Dendritic cell treated with granulocyte-macrophage colony-stimulating factor and Interleukin-4, amounts not matched to agents 40 ng/mL and 50 ng/mL, for 4 days (primary cell): ENCODE measurements at regions of chr1 and their contacts with region 1.

Region 1: GRCh38 chr1:56135069-56135863 is 444.1 kb downstream of the PLPP3 start:
- H3K4me3 Mint-ChIP-seq: no peak overlapping the region
- H3K27ac Mint-ChIP-seq: peak overlapping the region; percentile 12
- H3K4me1 Mint-ChIP-seq: peaks cover 36% of the 10 kb centered on the region
- H3K27me3 Mint-ChIP-seq: peaks cover 49% of the 10 kb centered on the region

Region 2: GRCh38 chr1:55848906-55849305 is 286.4 kb before region 1 on chr1:
- intact Hi-C with region 1: no loop called
- H3K4me3 Mint-ChIP-seq: no peak overlapping the region
- H3K27ac Mint-ChIP-seq: no peak overlapping the region
- H3K4me1 Mint-ChIP-seq: no peaks in the 10 kb centered on the region
- H3K27me3 Mint-ChIP-seq: peaks cover 3% of the 10 kb centered on the region

Region 3: DNA sequence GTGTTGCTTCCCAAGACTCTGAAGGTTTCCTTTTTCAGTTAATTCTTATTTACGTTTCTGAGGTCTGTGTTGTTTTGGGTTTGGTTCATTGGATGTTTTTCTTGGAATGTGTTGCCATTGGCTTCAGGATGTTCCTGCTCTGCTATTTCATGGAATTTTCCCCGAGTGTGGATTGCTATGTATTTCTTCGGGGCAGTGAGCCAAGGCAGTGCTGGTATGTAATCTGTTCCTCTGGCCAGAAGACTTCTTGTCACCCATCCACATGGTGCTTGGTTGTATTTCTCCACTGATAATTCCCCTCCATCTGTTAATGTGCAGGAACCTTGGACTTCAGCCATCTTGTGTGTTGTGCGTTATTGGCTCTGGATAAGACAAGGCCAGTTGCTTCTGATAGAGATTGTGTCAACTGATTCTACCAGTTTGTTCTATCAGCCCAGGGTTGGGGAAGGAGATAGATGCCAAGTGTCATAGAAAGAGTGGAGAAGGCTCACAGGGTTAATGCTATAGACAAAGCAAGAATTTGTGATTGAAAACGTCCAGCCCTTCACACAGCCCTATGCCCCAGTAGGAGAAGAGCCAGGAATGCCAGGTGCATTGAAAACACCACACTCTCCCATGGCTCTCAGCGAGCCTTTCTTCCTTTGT is 61.1 kb before region 1 on chr1:
- intact Hi-C with region 1: loop called (anchors 5 kb)
- H3K4me3 Mint-ChIP-seq: no peak overlapping the region
- H3K27ac Mint-ChIP-seq: no peak overlapping the region
- H3K4me1 Mint-ChIP-seq: peaks cover 5% of the 10 kb centered on the region
- H3K27me3 Mint-ChIP-seq: peaks cover 16% of the 10 kb centered on the region

Region 4: GRCh38 chr1:56229186-56229585 is 93.9 kb after region 1 on chr1:
- intact Hi-C with region 1: no loop called
- H3K4me3 Mint-ChIP-seq: no peak overlapping the region
- H3K27ac Mint-ChIP-seq: no peak overlapping the region
- H3K4me1 Mint-ChIP-seq: peaks cover 43% of the 10 kb centered on the region
- H3K27me3 Mint-ChIP-seq: peaks cover 13% of the 10 kb centered on the region

Region 5: DNA sequence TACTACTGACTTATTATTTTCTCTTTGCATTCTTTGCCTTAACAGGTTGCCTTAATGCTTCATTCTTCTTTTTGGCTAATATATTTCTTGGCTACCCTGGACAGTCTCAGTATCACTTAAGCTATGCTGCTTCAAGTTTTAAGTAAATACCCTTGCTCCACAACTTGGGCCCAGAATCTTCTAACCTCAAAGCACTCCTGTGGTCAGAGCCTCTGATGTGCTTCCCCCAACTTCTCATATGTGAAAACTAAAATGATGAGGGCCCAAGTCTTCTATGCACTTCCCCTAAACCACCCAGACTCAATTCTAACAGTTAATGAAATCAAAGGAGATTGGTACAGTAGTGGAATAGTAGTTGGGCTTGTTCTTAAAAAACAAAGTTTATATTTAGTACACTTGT is 129.9 kb after region 1 on chr1:
- intact Hi-C with region 1: loop called (anchors 10 kb)
- H3K4me3 Mint-ChIP-seq: no peak overlapping the region
- H3K27ac Mint-ChIP-seq: no peak overlapping the region
- H3K4me1 Mint-ChIP-seq: peaks cover 38% of the 10 kb centered on the region
- H3K27me3 Mint-ChIP-seq: peaks cover 30% of the 10 kb centered on the region